ENCODE measurements at regions of chr2 and their contacts with region 1.

Region 1: GRCh38 chr2:182642328-182642727 is 73.7 kb upstream of the DNAJC10 start:
- DNase-seq: peak; percentile 72 to 74
- H3K4me3 ChIP-seq: no peak overlapping the region
- H3K4me3 Mint-ChIP-seq: no peak overlapping the region
- H3K27ac Mint-ChIP-seq: no peak overlapping the region
- H3K4me1 ChIP-seq: no peaks in the 10 kb centered on the region
- H3K4me1 Mint-ChIP-seq: no peaks in the 10 kb centered on the region
- H3K27me3 ChIP-seq: no peaks in the 10 kb centered on the region
- H3K27me3 Mint-ChIP-seq: peaks cover 3% of the 10 kb centered on the region
- CTCF ChIP-seq: no peak

Region 2: DNA sequence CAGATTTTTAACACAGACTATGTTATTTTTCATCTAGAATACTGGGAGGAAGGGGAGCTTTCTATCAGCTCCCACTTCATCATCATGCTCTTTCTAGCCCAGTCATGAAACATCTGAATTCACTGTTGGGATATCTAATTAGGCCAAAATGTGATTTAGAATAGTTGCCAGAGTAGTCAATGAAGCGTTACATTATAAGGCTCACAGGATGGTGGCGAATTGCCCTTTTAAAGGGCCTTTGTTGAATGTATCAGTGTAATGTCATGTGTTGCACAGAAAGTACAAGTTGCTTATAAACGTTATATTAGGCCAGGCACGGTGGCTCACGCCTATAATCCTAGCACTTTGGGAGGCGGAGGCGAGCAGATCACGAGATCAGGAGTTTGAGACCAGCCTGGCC is 261.1 kb before region 1 on chr2:
- CTCF ChIA-PET with region 1: no interaction called
- POLR2A ChIA-PET with region 1: no interaction called
- intact Hi-C with region 1: loop called (anchors 10 kb)
- DNase-seq: no peak
- H3K4me3 ChIP-seq: no peak overlapping the region
- H3K4me3 Mint-ChIP-seq: no peak overlapping the region
- H3K27ac Mint-ChIP-seq: no peak overlapping the region
- H3K4me1 ChIP-seq: no peaks in the 10 kb centered on the region
- H3K4me1 Mint-ChIP-seq: no peaks in the 10 kb centered on the region
- H3K27me3 ChIP-seq: no peaks in the 10 kb centered on the region
- H3K27me3 Mint-ChIP-seq: no peaks in the 10 kb centered on the region
- CTCF ChIP-seq: no peak

Region 3: GRCh38 chr2:182499706-182500470 is 142.4 kb before region 1 on chr2:
- CTCF ChIA-PET with region 1: no interaction called
- POLR2A ChIA-PET with region 1: no interaction called
- intact Hi-C with region 1: loop called (anchors 10 kb)
- DNase-seq: no peak
- H3K4me3 ChIP-seq: no peak overlapping the region
- H3K4me3 Mint-ChIP-seq: no peak overlapping the region
- H3K27ac Mint-ChIP-seq: no peak overlapping the region
- H3K4me1 ChIP-seq: no peaks in the 10 kb centered on the region
- H3K4me1 Mint-ChIP-seq: no peaks in the 10 kb centered on the region
- H3K27me3 ChIP-seq: no peaks in the 10 kb centered on the region; the same call in 1 of the 2 replicates
- H3K27me3 Mint-ChIP-seq: no peaks in the 10 kb centered on the region
- CTCF ChIP-seq: no peak

Region 4: DNA sequence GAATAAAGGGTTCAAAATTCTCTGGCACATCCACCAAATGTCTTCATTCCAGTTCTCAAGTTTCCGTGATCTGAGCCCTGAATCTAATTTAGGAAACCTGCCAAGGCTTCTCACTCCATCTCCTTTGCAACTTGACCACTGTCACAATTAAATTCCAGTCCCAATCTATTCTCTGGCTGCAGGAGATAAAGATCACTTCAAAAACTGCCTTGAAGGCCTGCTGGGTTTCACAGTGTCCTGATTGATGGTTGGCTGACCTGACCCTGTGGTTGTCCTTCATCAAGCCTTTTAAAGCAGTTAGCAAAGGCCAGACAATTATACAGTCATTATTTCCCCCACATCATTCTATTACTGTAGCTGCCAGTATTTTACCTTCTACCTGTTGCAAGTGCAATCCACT is 13.4 kb after region 1 on chr2:
- CTCF ChIA-PET with region 1: no interaction called
- POLR2A ChIA-PET with region 1: no interaction called
- intact Hi-C with region 1: no loop called
- DNase-seq: no peak
- H3K4me3 ChIP-seq: no peak overlapping the region
- H3K4me3 Mint-ChIP-seq: no peak overlapping the region
- H3K27ac Mint-ChIP-seq: no peak overlapping the region
- H3K4me1 ChIP-seq: no peaks in the 10 kb centered on the region
- H3K4me1 Mint-ChIP-seq: no peaks in the 10 kb centered on the region
- H3K27me3 ChIP-seq: no peaks in the 10 kb centered on the region
- H3K27me3 Mint-ChIP-seq: peaks cover 3% of the 10 kb centered on the region
- CTCF ChIP-seq: no peak

Region 5: GRCh38 chr2:182682210-182682609 is 39.9 kb after region 1 on chr2:
- CTCF ChIA-PET with region 1: no interaction called
- POLR2A ChIA-PET with region 1: no interaction called
- intact Hi-C with region 1: no loop called
- DNase-seq: no peak
- H3K4me3 ChIP-seq: no peak overlapping the region
- H3K4me3 Mint-ChIP-seq: no peak overlapping the region
- H3K27ac Mint-ChIP-seq: no peak overlapping the region
- H3K4me1 ChIP-seq: no peaks in the 10 kb centered on the region
- H3K4me1 Mint-ChIP-seq: no peaks in the 10 kb centered on the region
- H3K27me3 ChIP-seq: no peaks in the 10 kb centered on the region
- H3K27me3 Mint-ChIP-seq: no peaks in the 10 kb centered on the region
- CTCF ChIP-seq: no peak

Measured in Caco-2 (cell line).